ENCODE measurements at regions of chr15 and their contacts with region 1.

Region 1: DNA sequence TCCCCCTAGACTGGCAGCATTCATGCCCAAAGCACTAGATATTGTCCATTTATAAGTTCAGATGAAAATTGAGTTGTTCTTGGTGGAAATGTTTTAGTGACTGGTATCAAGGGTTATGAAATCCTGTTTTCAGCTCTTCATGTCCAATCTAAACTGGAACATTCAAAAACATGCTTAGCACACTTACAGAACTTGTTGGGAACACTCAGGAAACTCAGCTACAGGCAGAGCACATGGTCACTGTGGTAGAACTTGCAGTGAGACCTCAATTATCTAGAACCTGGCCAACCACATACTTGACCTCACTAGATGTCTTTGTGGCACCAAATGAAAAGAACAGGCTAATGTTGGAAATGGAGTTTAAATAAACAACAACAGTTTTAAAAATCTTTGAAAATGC is 88.8 kb downstream of the SMAD3 start:
- DNase-seq: no peak
- ATAC-seq: no peak
- H3K4me3 ChIP-seq: no peak overlapping the region
- H3K27ac ChIP-seq: peak overlapping the region; percentile 62; the same call in 1 of the 2 replicates
- H3K4me1 ChIP-seq: peaks cover 28% of the 10 kb centered on the region
- H3K27me3 ChIP-seq: no peaks in the 10 kb centered on the region
- CTCF ChIP-seq: no peak
- POLR2A ChIP-seq: no peak
- RAD21 ChIP-seq: no peak

Region 2: DNA sequence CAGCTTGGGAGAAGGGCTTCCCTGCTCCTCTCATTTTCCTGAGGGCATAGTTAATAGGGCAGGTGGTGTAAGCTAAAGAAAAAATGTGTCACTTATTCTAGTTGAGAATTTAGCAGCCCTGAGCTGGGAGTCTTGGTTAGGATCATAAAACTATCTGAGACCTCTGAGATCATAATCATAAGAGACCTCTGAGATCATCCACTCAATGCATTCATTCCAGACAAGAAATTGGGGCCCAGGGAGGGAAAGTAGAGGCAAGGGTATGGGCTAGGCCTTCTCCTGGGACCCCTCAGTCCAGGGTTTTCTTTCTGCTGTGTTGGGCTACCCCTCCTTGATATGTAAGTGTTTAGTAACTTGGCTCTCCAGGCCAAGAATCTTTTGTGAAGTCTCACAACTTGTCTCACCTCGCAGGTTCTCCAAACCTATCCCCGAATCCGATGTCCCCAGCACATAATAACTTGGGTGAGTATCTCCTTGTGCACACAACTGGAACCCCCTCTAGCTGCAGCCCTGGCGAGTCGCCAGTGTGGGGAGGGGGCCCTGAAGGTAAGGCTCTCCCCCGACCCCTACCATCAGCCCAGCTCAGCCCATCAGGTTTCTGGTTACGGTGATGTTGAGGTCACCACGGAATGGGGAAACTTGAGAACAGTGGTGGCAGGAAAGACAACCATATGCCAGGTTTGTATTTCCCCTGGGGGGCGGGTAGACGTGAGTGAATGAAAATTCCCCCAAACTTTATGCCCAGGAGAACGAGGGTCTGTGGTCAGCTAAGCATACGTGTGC is 16.1 kb after region 1 on chr15:
- CTCF ChIA-PET with region 1: no interaction called
- POLR2A ChIA-PET with region 1: no interaction called
- dilution Hi-C with region 1: no loop called
- in situ Hi-C with region 1: no loop called
- intact Hi-C with region 1: loop called (anchors 2 kb)
- DNase-seq: no peak
- ATAC-seq: no peak
- H3K4me3 ChIP-seq: no peak overlapping the region
- H3K27ac ChIP-seq: peak overlapping the region; percentile 48
- H3K4me1 ChIP-seq: peaks cover 72% of the 10 kb centered on the region
- H3K27me3 ChIP-seq: no peaks in the 10 kb centered on the region
- CTCF ChIP-seq: no peak
- POLR2A ChIP-seq: no peak
- RAD21 ChIP-seq: no peak